ENCODE measurements at regions of chr11 and their contacts with region 1.

Region 1: DNA sequence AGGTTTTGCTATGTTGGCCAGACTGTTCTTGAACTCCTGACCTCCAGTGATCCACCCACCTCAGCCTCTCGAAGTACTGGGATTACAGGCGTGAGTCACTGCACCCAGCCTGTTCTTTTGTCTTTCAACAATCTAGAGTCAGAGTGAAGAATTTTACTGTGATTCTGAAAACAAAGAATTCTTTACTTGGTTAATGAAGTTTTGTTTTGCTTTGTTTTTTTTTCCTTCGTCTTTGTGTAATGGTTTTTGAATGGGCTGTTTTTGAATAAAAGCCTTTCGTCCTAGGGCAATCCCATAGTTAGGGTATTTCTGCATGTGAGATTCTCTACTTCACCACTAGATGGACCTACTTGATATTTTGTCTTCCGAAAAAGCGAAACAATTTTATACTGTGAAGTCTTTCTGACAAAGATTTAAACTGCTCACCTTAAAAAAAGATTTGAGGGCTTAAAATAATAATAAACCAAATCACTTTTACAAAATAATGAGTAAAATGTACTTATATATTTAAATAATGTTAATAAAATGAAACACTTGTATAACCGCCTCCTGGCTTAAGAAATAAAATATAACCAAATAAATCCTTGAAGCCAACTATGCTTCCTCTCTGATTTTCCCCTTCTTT is 43.4 kb upstream of the SC5D start:
- DNase-seq: peak; percentile 54
- ATAC-seq: peak; percentile 87
- H3K4me3 Mint-ChIP-seq: no peak overlapping the region
- H3K27ac Mint-ChIP-seq: no peak overlapping the region
- H3K4me1 Mint-ChIP-seq: peaks cover 5% of the 10 kb centered on the region
- H3K27me3 Mint-ChIP-seq: peaks cover 6% of the 10 kb centered on the region

Region 2: DNA sequence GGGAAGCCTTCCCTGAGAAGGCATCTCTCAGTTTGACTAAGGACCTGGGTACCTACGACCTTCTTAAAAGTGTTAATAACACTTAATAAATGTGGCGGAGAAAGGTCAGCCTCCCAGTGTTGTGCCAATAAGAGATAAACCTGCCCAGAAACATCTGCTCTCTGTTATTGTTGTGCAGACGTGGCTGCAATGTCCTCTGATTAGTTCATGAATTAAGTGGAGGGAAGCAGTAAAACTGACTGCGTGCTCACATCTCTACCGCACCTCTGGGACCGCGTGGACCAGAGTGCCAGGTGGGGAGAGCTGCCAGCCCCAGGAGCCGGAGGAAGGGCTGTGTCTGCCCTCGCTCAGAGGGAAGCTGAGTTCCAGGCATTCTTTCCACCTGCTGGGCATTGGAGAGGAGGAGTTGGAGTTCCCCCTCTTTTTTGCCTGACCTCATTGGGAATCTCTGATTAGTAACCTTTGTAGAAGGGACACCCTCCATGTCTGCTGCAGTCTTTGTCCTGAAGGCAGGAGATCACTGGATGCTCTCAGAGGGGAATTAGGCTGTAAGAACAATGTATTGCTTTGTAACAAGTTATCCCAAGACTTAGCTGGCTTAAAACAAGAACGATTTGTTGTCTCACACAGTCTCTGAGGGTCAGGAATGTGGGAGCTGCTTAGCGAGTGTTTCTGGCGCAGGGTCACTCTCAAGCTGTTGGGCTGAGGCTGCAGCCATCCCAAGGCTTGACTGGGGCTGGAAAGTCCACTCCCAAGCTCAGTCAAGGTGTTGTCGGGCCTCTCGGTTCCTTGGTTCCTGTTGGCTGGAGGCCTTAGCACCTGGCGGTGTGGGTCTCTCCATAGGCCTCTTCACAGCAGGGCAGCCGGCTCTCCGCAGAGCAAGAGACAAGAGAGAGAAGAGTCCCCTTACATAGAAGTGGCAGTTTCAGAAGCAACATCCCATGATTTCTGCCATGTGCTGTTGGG is 472.9 kb before region 1 on chr11:
- CTCF ChIA-PET with region 1: no interaction called
- POLR2A ChIA-PET with region 1: no interaction called
- intact Hi-C with region 1: no loop called
- DNase-seq: no peak
- ATAC-seq: no peak
- H3K4me3 Mint-ChIP-seq: no peak overlapping the region
- H3K27ac Mint-ChIP-seq: no peak overlapping the region
- H3K4me1 Mint-ChIP-seq: no peaks in the 10 kb centered on the region
- H3K27me3 Mint-ChIP-seq: peaks cover 19% of the 10 kb centered on the region

Region 3: DNA sequence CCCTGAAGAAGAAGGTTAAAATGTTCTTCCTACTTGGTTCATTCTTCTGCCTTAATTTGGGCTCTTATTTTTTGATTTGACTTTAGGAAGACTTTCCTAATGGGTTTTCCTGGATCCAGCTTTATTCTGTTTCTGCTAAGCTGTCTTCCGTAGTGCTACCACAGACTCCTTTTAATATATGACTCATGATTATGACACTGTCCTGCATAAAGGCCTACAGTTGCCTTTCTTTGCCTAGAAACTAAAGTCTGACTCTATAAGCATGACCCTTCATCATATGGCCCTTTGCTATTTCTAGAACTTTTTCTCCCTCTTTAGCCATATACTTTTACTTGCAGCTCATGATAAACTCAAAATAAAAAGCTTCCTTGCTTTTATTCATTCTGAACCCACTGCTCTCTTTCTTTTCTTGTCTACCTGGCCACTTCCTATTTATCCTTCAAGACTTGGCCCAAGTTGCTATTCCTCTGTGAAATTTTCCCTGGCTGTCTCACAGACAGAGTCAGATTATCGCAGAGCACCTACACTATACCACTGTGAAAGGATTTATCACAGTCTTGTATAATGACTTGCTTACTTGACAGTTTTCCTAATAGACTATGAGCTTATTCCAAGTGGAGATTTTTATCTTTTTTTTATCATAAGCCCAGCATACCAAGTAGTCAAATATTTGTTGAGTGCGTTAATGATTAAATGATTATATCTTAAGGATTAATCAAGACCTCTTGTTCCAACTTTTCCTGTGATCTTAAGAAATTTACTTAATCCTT is 200.5 kb before region 1 on chr11:
- CTCF ChIA-PET with region 1: no interaction called
- POLR2A ChIA-PET with region 1: no interaction called
- intact Hi-C with region 1: no loop called
- DNase-seq: no peak
- ATAC-seq: no peak
- H3K4me3 Mint-ChIP-seq: no peak overlapping the region
- H3K27ac Mint-ChIP-seq: no peak overlapping the region
- H3K4me1 Mint-ChIP-seq: no peaks in the 10 kb centered on the region
- H3K27me3 Mint-ChIP-seq: no peaks in the 10 kb centered on the region

Region 4: GRCh38 chr11:121188776-121189175 is 60.4 kb before region 1 on chr11:
- CTCF ChIA-PET with region 1: no interaction called
- POLR2A ChIA-PET with region 1: no interaction called
- intact Hi-C with region 1: no loop called
- DNase-seq: no peak
- ATAC-seq: no peak
- H3K4me3 Mint-ChIP-seq: no peak overlapping the region
- H3K27ac Mint-ChIP-seq: no peak overlapping the region
- H3K4me1 Mint-ChIP-seq: no peaks in the 10 kb centered on the region
- H3K27me3 Mint-ChIP-seq: peaks cover 21% of the 10 kb centered on the region

Region 5: DNA sequence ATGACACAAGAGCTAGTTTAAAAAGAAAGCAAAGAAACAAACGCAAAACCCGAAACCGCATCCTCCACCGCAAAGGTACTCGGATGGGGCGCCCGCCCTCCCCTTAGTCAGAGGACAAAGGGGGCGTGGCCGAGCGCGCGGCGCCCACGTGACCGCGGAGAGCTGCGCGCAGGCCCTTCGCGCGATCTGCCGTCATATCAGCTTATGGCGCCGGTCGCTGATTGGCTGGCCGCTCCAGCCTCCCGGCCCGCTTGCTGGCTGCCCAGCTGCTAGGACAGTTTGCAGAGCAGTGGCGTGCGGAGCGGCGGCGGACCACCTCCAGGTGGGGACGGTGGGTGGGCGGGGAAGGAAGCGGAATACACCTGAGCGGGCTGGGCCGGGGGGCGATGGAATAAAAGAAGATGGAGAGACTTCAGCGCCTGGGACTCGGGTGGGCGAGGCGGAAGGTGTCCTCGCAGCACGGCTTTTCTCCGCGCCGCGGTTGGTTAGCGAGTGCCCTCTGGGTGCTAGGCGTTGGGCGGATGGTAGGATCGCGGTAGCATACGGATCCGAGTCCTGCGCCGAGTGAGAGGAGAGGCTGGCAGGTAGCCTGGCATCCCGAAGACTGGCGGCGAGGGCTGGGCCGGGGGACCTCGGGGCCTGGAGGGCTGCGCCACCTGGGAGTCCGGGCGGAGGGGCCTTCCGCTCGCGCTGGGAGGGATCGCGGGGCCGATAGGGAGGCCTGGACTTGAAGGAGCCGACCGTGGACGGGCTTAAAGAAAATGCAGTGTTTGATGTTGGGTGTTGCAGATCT is 43.5 kb after region 1 on chr11 and contains the start of gene SC5D:
- CTCF ChIA-PET with region 1: interaction called, 4 read pairs
- POLR2A ChIA-PET with region 1: no interaction called
- intact Hi-C with region 1: loop called (anchors 2 to 5 kb)
- DNase-seq: peak; percentile 97
- ATAC-seq: peak; percentile 95
- H3K4me3 Mint-ChIP-seq: peak within 1 kb of the TSS; percentile 81
- H3K27ac Mint-ChIP-seq: peak within 1 kb of the TSS; percentile 91
- H3K4me1 Mint-ChIP-seq: peaks cover 36% of the 10 kb centered on the region
- H3K27me3 Mint-ChIP-seq: no peaks in the 10 kb centered on the region
- total RNA-seq, gene SC5D: 22.3 to 29.9 TPM

Measured in activated CD4-positive, alpha-beta T cell treated with anti-CD3 and anti-CD28 coated beads for 36 hours (primary cell).